CD4-positive, alpha-beta memory T cell (primary cell): ENCODE measurements at regions of chr13 and their contacts with region 1.

Region 1: DNA sequence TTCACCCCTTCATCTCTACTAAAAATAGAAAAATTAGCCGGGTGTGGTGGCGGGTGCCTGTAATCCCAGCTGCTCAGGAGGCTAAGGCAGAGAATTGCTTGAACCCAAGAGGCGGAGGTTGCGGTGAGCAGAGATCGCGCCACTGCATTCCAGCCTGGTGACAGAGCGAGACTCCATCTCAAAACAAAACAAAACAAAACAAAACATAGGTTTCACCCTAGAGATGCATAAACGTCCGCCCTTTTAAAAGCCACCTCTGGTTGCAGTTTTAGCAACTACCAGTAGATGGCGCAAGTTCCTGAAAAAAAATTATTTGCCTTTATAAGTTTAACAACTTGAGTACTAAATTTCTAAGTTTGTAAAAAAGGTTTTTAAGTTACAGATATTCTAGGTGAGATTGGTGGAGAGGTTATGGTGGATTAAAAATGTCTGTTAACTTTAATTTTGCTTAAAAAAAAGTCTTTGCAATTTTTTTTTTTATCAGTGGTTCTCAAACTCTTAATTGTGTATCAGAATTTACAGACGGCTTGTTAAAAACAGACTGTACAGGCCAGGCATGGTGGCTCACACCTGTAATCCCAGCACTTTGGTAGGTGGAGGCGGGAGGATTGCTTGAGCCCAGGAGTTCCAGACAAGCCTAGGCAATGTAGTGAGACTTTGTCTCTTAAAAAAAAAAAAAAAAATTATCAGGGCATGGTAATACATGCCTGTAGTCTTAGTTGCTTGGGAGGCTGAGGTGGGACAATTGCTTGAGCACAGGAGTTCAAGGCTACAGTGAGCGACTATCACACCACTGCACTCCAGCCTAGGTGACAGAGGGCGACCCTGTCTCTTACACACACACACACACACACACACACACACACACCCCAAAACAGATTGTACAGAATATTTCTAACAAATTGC is 42.1 kb downstream of the NAA16 start:
- DNase-seq: peak; percentile 75 to 78 (median 76)
- H3K4me3 ChIP-seq: no peak overlapping the region
- H3K4me3 Mint-ChIP-seq: peak overlapping the region in 7 of 8 donors; percentile 4 to 76 (median 28)
- H3K27ac ChIP-seq: peak overlapping the region; percentile 65
- H3K27ac Mint-ChIP-seq: peak overlapping the region; percentile 79 to 97 (median 92)
- H3K4me1 ChIP-seq: peaks cover 51% of the 10 kb centered on the region
- H3K4me1 Mint-ChIP-seq: peaks cover 37 to 60% (median 47%) of the 10 kb centered on the region in 4 donors
- H3K27me3 ChIP-seq: no peaks in the 10 kb centered on the region
- H3K27me3 Mint-ChIP-seq: no peaks in the 10 kb centered on the region

Region 2: DNA sequence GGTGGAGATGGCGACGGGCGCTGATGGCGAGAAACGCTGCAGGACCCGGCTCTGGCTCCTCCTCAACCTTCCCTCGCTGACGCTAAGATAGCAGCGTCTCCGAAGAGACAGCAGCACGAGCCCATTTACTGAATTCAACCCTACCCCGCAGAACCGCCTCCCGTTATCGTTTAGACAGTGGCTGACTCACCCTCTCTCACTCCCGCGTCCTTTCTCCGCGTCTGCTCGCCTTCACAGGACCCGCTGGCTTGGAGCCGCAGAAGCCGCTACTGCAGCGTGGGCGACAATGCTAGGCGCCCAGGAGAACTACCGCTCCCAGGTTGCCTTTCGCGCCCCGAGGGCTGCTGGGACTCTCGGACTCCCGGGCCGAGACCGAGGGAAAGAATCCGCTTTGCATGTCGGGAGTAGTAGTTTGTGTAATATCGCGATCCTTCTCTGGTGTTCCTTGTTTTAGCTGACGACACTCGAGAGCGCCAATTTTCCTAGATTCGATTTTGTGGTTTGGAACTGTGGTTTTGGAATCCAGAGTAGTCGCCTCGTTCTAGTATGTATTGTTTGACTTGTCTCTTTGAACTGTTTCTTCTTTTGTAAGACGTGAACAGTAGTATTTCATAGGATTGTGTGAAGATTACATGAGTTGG is 220.6 kb before region 1 on chr13 and contains the start of gene KBTBD6:
- CTCF ChIA-PET with region 1: no interaction called
- POLR2A ChIA-PET with region 1: no interaction called
- intact Hi-C with region 1: no loop called
- DNase-seq: peak; percentile 89 to 95 (median 90)
- H3K4me3 ChIP-seq: peak within 1 kb of the TSS; percentile 56
- H3K4me3 Mint-ChIP-seq: peak within 1 kb of the TSS; percentile 95 to 100 (median 99)
- H3K27ac ChIP-seq: peak within 1 kb of the TSS; percentile 63
- H3K27ac Mint-ChIP-seq: peak within 1 kb of the TSS; percentile 91 to 98 (median 98)
- H3K4me1 ChIP-seq: peaks cover 49% of the 10 kb centered on the region
- H3K4me1 Mint-ChIP-seq: peaks cover 39 to 55% (median 46%) of the 10 kb centered on the region in 4 donors
- H3K27me3 ChIP-seq: no peaks in the 10 kb centered on the region
- H3K27me3 Mint-ChIP-seq: no peaks in the 10 kb centered on the region
- total RNA-seq, gene KBTBD6: 9.9 to 10.5 TPM

Region 3: GRCh38 chr13:41310963-41311606 is 42.1 kb before region 1 on chr13 and contains the start of gene NAA16:
- CTCF ChIA-PET with region 1: no interaction called
- POLR2A ChIA-PET with region 1: interaction called, 4 read pairs
- intact Hi-C with region 1: loop called (anchors 5 kb)
- DNase-seq: peak; percentile 92 to 94 (median 93)
- H3K4me3 ChIP-seq: peak within 1 kb of the TSS; percentile 85 to 94
- H3K4me3 Mint-ChIP-seq: peak within 1 kb of the TSS; percentile 94 to 97 (median 96)
- H3K27ac ChIP-seq: peak within 1 kb of the TSS; percentile 83
- H3K27ac Mint-ChIP-seq: peak within 1 kb of the TSS; percentile 94 to 96 (median 96)
- H3K4me1 ChIP-seq: peaks cover 45% of the 10 kb centered on the region
- H3K4me1 Mint-ChIP-seq: peaks cover 22 to 46% (median 36%) of the 10 kb centered on the region in 4 donors
- H3K27me3 ChIP-seq: no peaks in the 10 kb centered on the region
- H3K27me3 Mint-ChIP-seq: no peaks in the 10 kb centered on the region
- total RNA-seq, gene NAA16: 62.3 to 62.5 TPM

Region 4: GRCh38 chr13:41411522-41411921 is 58.3 kb after region 1 on chr13:
- CTCF ChIA-PET with region 1: interaction called, 5 read pairs
- POLR2A ChIA-PET with region 1: interaction called, 3 read pairs
- intact Hi-C with region 1: loop called (anchors 1 kb)
- DNase-seq: peak in 4 of 5 donors; percentile 29 to 42 (median 34)
- H3K4me3 ChIP-seq: no peak overlapping the region
- H3K4me3 Mint-ChIP-seq: peak overlapping the region in 1 of 8 donors; percentile 14
- H3K27ac ChIP-seq: no peak overlapping the region
- H3K27ac Mint-ChIP-seq: peak overlapping the region in 3 of 7 donors; percentile 25 to 80 (median 70)
- H3K4me1 ChIP-seq: no peaks in the 10 kb centered on the region
- H3K4me1 Mint-ChIP-seq: peaks cover 0 to 7% (median under 1%) of the 10 kb centered on the region in 4 donors
- H3K27me3 ChIP-seq: no peaks in the 10 kb centered on the region
- H3K27me3 Mint-ChIP-seq: no peaks in the 10 kb centered on the region

Region 5: GRCh38 chr13:41543664-41544300 is 190.6 kb after region 1 on chr13:
- CTCF ChIA-PET with region 1: no interaction called
- POLR2A ChIA-PET with region 1: interaction called, 3 read pairs
- intact Hi-C with region 1: loop called (anchors 5 kb)
- DNase-seq: no peak
- H3K4me3 ChIP-seq: no peak overlapping the region
- H3K4me3 Mint-ChIP-seq: no peak overlapping the region
- H3K27ac ChIP-seq: no peak overlapping the region
- H3K27ac Mint-ChIP-seq: peak overlapping the region in 1 of 7 donors; percentile 22
- H3K4me1 ChIP-seq: peaks cover 18% of the 10 kb centered on the region
- H3K4me1 Mint-ChIP-seq: peaks cover 15 to 32% (median 18%) of the 10 kb centered on the region in 4 donors
- H3K27me3 ChIP-seq: no peaks in the 10 kb centered on the region
- H3K27me3 Mint-ChIP-seq: no peaks in the 10 kb centered on the region

Region 6: GRCh38 chr13:41652727-41653361 is 299.7 kb after region 1 on chr13:
- CTCF ChIA-PET with region 1: interaction called, 12 read pairs
- POLR2A ChIA-PET with region 1: interaction called, 4 read pairs
- intact Hi-C with region 1: loop called (anchors 1 kb)
- DNase-seq: peak; percentile 45 to 54 (median 50)
- H3K4me3 ChIP-seq: no peak overlapping the region
- H3K4me3 Mint-ChIP-seq: no peak overlapping the region
- H3K27ac ChIP-seq: no peak overlapping the region
- H3K27ac Mint-ChIP-seq: peak overlapping the region in 3 of 7 donors; percentile 19 to 86 (median 43)
- H3K4me1 ChIP-seq: no peaks in the 10 kb centered on the region
- H3K4me1 Mint-ChIP-seq: peaks cover 4 to 9% (median 7%) of the 10 kb centered on the region in 4 donors
- H3K27me3 ChIP-seq: no peaks in the 10 kb centered on the region
- H3K27me3 Mint-ChIP-seq: no peaks in the 10 kb centered on the region

Region 7: GRCh38 chr13:42048682-42049453 is 695.7 kb after region 1 on chr13:
- CTCF ChIA-PET with region 1: no interaction called
- POLR2A ChIA-PET with region 1: no interaction called
- intact Hi-C with region 1: no loop called
- DNase-seq: peak; percentile 51 to 71 (median 57)
- H3K4me3 ChIP-seq: peak overlapping the region; percentile 45 to 76
- H3K4me3 Mint-ChIP-seq: peak overlapping the region; percentile 82 to 93 (median 89)
- H3K27ac ChIP-seq: peak overlapping the region; percentile 53
- H3K27ac Mint-ChIP-seq: peak overlapping the region in 4 of 7 donors; percentile 61 to 88 (median 74)
- H3K4me1 ChIP-seq: peaks cover 12% of the 10 kb centered on the region
- H3K4me1 Mint-ChIP-seq: peaks cover 17 to 25% (median 19%) of the 10 kb centered on the region in 4 donors
- H3K27me3 ChIP-seq: no peaks in the 10 kb centered on the region
- H3K27me3 Mint-ChIP-seq: no peaks in the 10 kb centered on the region

Region 8: GRCh38 chr13:42110410-42111155 is 757.4 kb after region 1 on chr13:
- CTCF ChIA-PET with region 1: no interaction called
- POLR2A ChIA-PET with region 1: no interaction called
- intact Hi-C with region 1: loop called (anchors 1 kb)
- DNase-seq: peak in 4 of 5 donors; percentile 63 to 68 (median 64)
- H3K4me3 ChIP-seq: no peak overlapping the region
- H3K4me3 Mint-ChIP-seq: peak overlapping the region in 1 of 8 donors; percentile 5
- H3K27ac ChIP-seq: no peak overlapping the region
- H3K27ac Mint-ChIP-seq: peak overlapping the region in 1 of 7 donors; percentile 24
- H3K4me1 ChIP-seq: peaks cover 6% of the 10 kb centered on the region
- H3K4me1 Mint-ChIP-seq: peaks cover 7 to 8% (median 7%) of the 10 kb centered on the region in 4 donors
- H3K27me3 ChIP-seq: no peaks in the 10 kb centered on the region
- H3K27me3 Mint-ChIP-seq: no peaks in the 10 kb centered on the region